Activated B cell treated with CpG ODN at 0.5 μM for 24 hours (primary cell): ENCODE measurements at regions of chr10 and their contacts with region 1.

Region 1: GRCh38 chr10:25875556-25876165 is 58.4 kb upstream of the MYO3A start:
- DNase-seq: peak; percentile 34
- ATAC-seq: peak; percentile 76
- H3K4me3 Mint-ChIP-seq: no peak overlapping the region
- H3K27ac Mint-ChIP-seq: no peak overlapping the region
- H3K4me1 Mint-ChIP-seq: no peaks in the 10 kb centered on the region
- H3K27me3 Mint-ChIP-seq: no peaks in the 10 kb centered on the region
- CTCF ChIP-seq: peak; percentile 91

Region 2: GRCh38 chr10:25934621-25935139 is 59.0 kb after region 1 on chr10:
- CTCF ChIA-PET with region 1: interaction called, 9 read pairs
- POLR2A ChIA-PET with region 1: interaction called, 6 read pairs
- intact Hi-C with region 1: loop called (anchors 1 kb)
- DNase-seq: peak; percentile 26
- ATAC-seq: peak; percentile 85
- H3K4me3 Mint-ChIP-seq: peak overlapping the region; percentile 83
- H3K27ac Mint-ChIP-seq: no peak overlapping the region
- H3K4me1 Mint-ChIP-seq: peaks cover 10% of the 10 kb centered on the region
- H3K27me3 Mint-ChIP-seq: peaks cover 26% of the 10 kb centered on the region
- CTCF ChIP-seq: no peak

Region 3: DNA sequence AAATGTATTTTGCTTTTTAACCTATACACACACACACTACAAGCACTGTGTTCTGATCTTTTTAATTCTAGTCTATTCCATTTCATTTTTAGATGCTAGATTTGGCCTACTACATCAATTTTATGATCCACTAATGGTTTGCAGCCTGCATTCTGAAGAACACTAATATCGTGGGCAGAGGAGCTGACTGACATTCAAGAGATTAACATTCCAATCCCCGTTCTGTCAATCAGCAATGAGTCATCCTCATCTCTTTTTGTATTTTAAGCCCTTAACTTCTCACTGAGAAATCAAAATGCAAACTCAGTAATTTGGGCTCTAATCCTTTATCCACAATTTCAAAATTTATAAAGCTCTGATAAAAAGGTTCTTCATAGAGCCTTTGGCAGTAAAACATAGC is 293.8 kb after region 1 on chr10:
- CTCF ChIA-PET with region 1: no interaction called
- POLR2A ChIA-PET with region 1: no interaction called
- intact Hi-C with region 1: loop called (anchors 10 kb)
- DNase-seq: no peak
- ATAC-seq: no peak
- H3K4me3 Mint-ChIP-seq: no peak overlapping the region
- H3K27ac Mint-ChIP-seq: no peak overlapping the region
- H3K4me1 Mint-ChIP-seq: no peaks in the 10 kb centered on the region
- H3K27me3 Mint-ChIP-seq: no peaks in the 10 kb centered on the region
- CTCF ChIP-seq: no peak

Region 4: GRCh38 chr10:26556748-26557640 is 681.3 kb after region 1 on chr10:
- CTCF ChIA-PET with region 1: interaction called, 18 read pairs
- POLR2A ChIA-PET with region 1: no interaction called
- intact Hi-C with region 1: no loop called
- DNase-seq: no peak
- ATAC-seq: peak; percentile 64
- H3K4me3 Mint-ChIP-seq: no peak overlapping the region
- H3K27ac Mint-ChIP-seq: peak overlapping the region; percentile 42
- H3K4me1 Mint-ChIP-seq: no peaks in the 10 kb centered on the region
- H3K27me3 Mint-ChIP-seq: no peaks in the 10 kb centered on the region
- CTCF ChIP-seq: peak; percentile 29